ENCODE measurements at regions of chr22 and their contacts with region 1.

Region 1: DNA sequence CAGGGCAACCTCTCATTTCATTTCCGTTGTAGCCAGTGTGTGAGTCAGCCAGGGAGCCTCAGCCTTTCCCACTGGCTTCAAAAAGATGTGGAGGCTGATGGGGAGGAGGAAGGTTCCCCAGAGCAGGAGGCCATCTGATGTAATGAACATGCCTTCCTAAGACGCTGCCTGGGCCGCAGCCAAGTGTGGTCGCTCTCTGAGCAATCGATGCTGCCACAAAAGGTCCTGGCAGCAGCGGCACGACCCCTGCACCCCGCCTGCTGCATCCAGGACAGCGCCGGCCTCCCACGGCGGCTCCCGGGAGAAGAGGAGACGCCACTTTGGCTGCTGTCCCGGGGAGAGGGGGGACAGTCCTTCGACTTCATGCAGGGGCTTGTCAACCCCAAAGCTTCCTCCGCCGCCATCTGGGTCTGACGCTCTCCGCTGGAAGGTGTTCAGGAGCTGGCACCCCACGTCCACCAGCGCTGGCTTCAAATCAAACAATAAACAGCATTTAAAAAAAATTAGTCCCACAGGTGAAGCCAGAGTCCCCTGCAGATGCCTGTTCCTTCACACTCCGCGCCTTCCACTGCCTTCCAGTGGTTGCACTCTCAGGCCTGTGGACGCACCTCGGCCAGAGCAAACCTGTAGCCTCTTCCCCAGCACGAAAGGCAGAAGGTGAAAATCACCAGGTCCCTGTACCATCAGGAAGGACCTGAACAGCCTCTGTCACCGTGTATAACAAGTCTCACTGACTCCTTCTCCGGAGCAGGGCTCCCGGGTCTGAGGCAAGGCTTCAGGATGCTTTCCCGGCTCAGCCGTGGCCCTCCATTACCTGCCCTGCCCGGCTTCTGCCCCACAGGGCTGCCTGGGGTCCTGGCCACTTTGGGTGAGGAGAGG is 930.7 kb downstream of the BRD1 start:
- DNase-seq: no peak
- H3K4me3 ChIP-seq: no peak overlapping the region
- H3K27ac ChIP-seq: no peak overlapping the region
- H3K4me1 ChIP-seq: no peaks in the 10 kb centered on the region
- H3K27me3 ChIP-seq: no peaks in the 10 kb centered on the region
- CTCF ChIP-seq: no peak

Region 2: DNA sequence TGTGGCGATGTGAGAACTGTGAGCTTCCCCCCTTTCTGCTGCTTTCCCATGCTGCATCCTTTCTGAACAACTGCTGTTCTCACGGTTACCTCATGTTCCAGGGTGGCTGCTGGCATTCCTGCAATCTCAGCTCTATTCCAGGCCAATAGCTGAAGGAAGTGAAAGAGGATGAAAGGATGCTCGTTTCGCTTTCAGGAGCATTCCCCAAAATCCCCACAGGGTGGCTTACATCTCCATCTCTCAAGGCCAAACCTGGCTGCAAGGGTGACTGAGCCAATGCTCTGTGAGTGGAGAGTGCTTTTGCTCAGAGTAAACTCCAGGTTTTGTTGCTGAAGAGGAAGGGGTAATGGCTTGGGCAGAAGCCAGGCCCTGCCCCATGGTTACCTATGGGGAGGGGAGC is 82.5 kb after region 1 on chr22:
- CTCF ChIA-PET with region 1: no interaction called
- dilution Hi-C with region 1: loop called (anchors 5 kb)
- in situ Hi-C with region 1: no loop called
- intact Hi-C with region 1: no loop called
- DNase-seq: no peak
- H3K4me3 ChIP-seq: no peak overlapping the region
- H3K27ac ChIP-seq: no peak overlapping the region
- H3K4me1 ChIP-seq: no peaks in the 10 kb centered on the region
- H3K27me3 ChIP-seq: no peaks in the 10 kb centered on the region
- CTCF ChIP-seq: no peak

Measured in mammary epithelial cell (primary cell).